AG04449 (cell line): ENCODE measurements at regions of chr2 and their contacts with region 1.

Region 1: DNA sequence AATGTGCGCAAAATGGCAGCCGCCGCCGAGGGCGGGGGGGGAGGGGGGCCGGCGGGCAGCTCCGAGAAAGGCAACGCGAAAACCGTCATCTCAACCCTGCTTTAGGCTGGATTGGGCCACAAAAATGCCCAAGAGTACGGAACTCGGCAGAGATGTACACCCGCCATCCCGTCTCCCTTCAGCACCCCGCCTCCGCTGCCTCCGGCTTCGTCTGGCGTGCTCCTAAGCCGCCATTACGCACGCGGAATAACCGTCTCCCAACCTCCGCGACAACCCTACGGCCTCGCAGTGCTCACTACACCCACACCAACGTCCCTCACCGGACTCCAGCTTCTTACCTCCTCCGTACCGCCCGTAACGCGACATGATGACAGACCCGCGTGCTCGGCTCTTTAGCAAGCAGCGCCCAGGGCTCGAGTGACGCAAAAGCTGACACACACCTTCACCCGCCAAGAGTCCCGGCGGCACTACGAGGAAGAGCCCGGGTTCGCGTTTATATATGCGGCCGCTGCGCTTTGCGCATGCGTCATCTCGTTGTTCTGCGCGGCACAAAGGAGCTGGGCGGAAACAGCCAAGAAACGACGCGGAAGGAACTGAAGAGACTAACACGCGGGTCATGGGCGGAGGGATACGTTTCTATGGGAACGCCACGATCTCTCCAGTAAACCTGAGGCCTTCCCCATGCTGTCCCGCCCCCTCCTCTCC is at the start of gene SRSF7:
- DNase-seq: peak; percentile 97
- H3K4me3 ChIP-seq: peak within 1 kb of the TSS; percentile 100
- CTCF ChIP-seq: no peak

Region 2: DNA sequence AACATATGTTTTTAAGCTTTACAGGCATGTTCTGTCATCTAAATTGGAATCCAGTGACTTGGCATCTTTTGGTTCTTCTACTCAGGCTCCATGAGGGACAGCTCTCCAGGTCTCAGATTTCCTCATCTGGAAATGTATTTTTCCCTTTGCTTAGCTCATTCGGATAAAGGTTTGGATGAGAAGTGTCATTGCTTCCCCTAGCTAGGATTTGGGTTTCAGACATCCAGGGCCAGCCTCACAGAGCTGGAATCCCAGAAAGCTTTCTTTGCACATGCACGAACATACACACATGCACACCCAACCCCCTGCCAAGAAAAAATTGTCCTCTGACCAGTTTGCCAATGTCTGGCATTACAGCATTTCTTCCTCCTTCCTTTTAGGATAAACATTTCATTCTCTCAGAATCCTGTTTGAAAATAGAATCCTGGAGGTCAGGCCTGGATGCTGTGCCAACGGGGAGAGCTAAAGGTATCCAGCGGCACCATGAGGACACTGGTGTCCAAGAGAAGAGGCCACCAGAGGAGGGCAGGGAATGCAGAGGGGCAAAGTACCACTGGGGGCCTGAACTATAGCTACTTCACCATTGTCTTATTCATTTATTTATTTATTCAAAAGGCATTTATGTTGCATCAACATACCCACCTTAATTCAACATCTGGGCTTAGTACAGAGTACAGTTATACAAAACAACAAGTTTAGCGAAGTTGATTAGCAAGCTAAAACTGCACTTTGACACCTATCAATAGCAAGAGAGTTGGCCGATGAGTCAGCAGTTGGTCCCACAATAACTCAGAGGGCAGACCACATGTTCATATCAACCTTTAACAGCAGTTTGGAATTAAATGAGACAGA is 276.1 kb before region 1 on chr2:
- CTCF ChIA-PET with region 1: no interaction called
- POLR2A ChIA-PET with region 1: no interaction called
- DNase-seq: no peak
- H3K4me3 ChIP-seq: no peak overlapping the region
- CTCF ChIP-seq: no peak

Region 3: DNA sequence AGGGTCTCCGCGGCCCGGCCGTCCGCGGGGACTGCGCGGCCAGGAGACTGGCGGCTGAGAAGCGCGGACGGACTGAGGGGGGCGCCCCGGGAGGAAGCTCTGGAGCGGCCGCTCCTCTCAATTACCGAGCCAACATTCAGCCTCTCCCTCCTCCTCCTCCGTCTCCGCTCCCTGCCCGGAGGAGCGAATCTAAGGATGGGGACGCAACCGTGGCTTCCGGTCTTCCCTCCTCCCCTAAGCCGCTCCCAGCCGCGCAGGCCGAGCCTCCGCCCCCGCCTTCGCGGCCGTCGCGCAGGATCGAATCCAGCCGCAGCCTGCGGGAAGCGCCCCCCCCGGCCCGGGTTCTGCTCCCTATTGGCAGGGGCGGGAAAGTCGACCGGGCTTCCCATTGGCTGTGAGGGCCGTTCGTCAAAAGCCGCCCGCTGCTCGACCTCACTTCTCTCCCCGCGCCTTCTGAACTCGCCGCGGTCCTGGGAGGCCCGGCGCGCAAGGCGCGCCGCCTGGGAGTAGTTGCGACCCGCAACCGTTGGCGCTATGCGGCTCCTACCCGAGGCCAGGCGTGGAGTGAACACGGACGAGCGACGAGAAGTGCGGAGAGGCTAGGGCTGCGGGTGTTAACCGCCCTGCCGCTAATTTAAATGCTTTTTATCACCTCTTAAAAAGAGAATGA is 148.2 kb before region 1 on chr2 and contains the start of gene HNRNPLL:
- CTCF ChIA-PET with region 1: interaction called, 3 read pairs
- POLR2A ChIA-PET with region 1: interaction called, 46 read pairs
- DNase-seq: peak; percentile 77
- H3K4me3 ChIP-seq: peak within 1 kb of the TSS; percentile 84
- CTCF ChIP-seq: peak; percentile 17

Region 4: GRCh38 chr2:38690499-38691294 is 60.3 kb before region 1 on chr2:
- CTCF ChIA-PET with region 1: no interaction called
- POLR2A ChIA-PET with region 1: interaction called, 15 read pairs
- DNase-seq: peak; percentile 79
- H3K4me3 ChIP-seq: no peak overlapping the region
- CTCF ChIP-seq: no peak

Region 5: GRCh38 chr2:38712876-38713275 is 38.2 kb before region 1 on chr2:
- CTCF ChIA-PET with region 1: no interaction called
- POLR2A ChIA-PET with region 1: no interaction called
- DNase-seq: no peak
- H3K4me3 ChIP-seq: no peak overlapping the region
- CTCF ChIP-seq: no peak

Region 6: GRCh38 chr2:38734299-38735058 is 16.6 kb before region 1 on chr2:
- CTCF ChIA-PET with region 1: interaction called, 5 read pairs
- POLR2A ChIA-PET with region 1: interaction called, 20 read pairs
- DNase-seq: no peak
- H3K4me3 ChIP-seq: no peak overlapping the region
- CTCF ChIP-seq: no peak

Region 7: GRCh38 chr2:38771632-38772031 is 20.6 kb after region 1 on chr2:
- CTCF ChIA-PET with region 1: no interaction called
- POLR2A ChIA-PET with region 1: interaction called, 15 read pairs
- DNase-seq: no peak
- H3K4me3 ChIP-seq: no peak overlapping the region
- CTCF ChIP-seq: no peak

Region 8: GRCh38 chr2:38825956-38826355 is 74.9 kb after region 1 on chr2:
- CTCF ChIA-PET with region 1: no interaction called
- POLR2A ChIA-PET with region 1: interaction called, 10 read pairs
- DNase-seq: no peak
- H3K4me3 ChIP-seq: no peak overlapping the region
- CTCF ChIP-seq: no peak

Region 9: GRCh38 chr2:38850045-38850444 is 99.0 kb after region 1 on chr2:
- CTCF ChIA-PET with region 1: no interaction called
- POLR2A ChIA-PET with region 1: no interaction called
- DNase-seq: no peak
- H3K4me3 ChIP-seq: no peak overlapping the region
- CTCF ChIP-seq: no peak